GM12878 (cell line): ENCODE measurements at regions of chr6 and their contacts with region 1.

Region 1: GRCh38 chr6:137641474-137642077 is 147.4 kb upstream of the OLIG3 start:
- DNase-seq: no peak
- ATAC-seq: peak; percentile 79
- H3K4me3 ChIP-seq: no peak overlapping the region
- H3K27ac ChIP-seq: no peak overlapping the region
- H3K4me1 ChIP-seq: peaks cover 21% of the 10 kb centered on the region
- H3K27me3 ChIP-seq: no peaks in the 10 kb centered on the region
- CTCF ChIP-seq: peak; percentile 53 to 83 (median 65)
- EP300 ChIP-seq: no peak
- POLR2A ChIP-seq: no peak
- RAD21 ChIP-seq: peak; percentile 91

Region 2: DNA sequence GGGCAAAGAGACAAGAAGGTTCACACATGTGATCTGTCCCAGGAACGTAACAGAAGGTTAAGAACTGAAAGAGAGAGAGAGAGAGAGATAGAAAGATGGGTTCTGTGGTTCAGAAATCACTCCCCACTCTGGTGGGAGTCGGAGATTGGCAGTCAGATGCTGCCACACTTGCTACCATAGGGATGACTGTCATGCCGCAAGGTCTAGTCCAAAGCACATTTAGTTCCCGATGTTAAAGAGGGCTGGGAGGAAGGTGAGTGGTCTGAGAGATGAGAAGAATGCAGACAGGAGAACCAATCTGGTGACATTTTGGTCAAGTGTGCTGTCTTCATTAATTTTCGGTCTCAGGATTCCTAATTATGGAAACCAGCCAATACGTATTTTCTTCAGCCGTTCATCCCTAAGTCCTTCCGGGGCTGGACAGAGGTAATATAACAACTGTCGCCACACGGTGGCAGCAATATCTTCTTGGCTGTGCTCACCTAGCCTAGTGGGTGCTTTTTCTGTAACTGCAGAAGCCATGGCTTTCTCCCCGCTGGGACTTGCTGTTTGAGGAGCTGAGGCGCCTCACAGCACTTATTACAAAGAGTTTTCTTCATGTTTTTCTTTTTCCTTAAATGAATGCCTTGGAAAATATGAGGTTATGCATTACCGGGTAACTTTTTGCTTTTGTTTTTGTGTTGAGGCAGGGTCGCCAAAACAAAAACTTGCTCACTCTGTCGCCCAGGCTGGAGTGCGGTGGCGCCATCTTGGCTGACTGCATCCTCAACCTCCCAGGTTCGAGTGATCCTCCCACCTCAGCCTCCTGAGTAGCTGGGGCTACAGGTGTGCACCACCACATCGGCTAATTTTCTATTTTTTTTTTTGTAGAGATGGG is 673.5 kb before region 1 on chr6:
- CTCF ChIA-PET with region 1: interaction called, 4 read pairs
- POLR2A ChIA-PET with region 1: no interaction called
- RAD21 ChIA-PET with region 1: interaction called, 3 read pairs
- SMC1A ChIA-PET with region 1: interaction called, 4 read pairs
- in situ Hi-C with region 1: no loop called
- intact Hi-C with region 1: loop called (anchors 1 kb)
- DNase-seq: peak; percentile 35
- ATAC-seq: peak; percentile 99
- H3K4me3 ChIP-seq: no peak overlapping the region
- H3K27ac ChIP-seq: no peak overlapping the region
- H3K4me1 ChIP-seq: no peaks in the 10 kb centered on the region
- H3K27me3 ChIP-seq: no peaks in the 10 kb centered on the region
- CTCF ChIP-seq: peak; percentile 62 to 82 (median 71); a peak in 5 of 6 replicates
- EP300 ChIP-seq: no peak
- POLR2A ChIP-seq: no peak
- RAD21 ChIP-seq: peak; percentile 78

Region 3: GRCh38 chr6:137415127-137415833 is 226.3 kb before region 1 on chr6:
- CTCF ChIA-PET with region 1: interaction called, 5 read pairs
- POLR2A ChIA-PET with region 1: no interaction called
- RAD21 ChIA-PET with region 1: interaction called, 4 read pairs
- SMC1A ChIA-PET with region 1: no interaction called
- in situ Hi-C with region 1: no loop called
- intact Hi-C with region 1: loop called (anchors 5 kb)
- DNase-seq: no peak
- ATAC-seq: peak; percentile 99
- H3K4me3 ChIP-seq: peak overlapping the region; percentile 62
- H3K27ac ChIP-seq: no peak overlapping the region
- H3K4me1 ChIP-seq: peaks cover 4% of the 10 kb centered on the region
- H3K27me3 ChIP-seq: peaks cover 0 to 3% of the 10 kb centered on the region in 2 experiments; a peak in 1 of 4 replicates
- CTCF ChIP-seq: peak; percentile 79 to 89 (median 85)
- EP300 ChIP-seq: no peak
- POLR2A ChIP-seq: no peak
- RAD21 ChIP-seq: peak; percentile 84

Region 4: DNA sequence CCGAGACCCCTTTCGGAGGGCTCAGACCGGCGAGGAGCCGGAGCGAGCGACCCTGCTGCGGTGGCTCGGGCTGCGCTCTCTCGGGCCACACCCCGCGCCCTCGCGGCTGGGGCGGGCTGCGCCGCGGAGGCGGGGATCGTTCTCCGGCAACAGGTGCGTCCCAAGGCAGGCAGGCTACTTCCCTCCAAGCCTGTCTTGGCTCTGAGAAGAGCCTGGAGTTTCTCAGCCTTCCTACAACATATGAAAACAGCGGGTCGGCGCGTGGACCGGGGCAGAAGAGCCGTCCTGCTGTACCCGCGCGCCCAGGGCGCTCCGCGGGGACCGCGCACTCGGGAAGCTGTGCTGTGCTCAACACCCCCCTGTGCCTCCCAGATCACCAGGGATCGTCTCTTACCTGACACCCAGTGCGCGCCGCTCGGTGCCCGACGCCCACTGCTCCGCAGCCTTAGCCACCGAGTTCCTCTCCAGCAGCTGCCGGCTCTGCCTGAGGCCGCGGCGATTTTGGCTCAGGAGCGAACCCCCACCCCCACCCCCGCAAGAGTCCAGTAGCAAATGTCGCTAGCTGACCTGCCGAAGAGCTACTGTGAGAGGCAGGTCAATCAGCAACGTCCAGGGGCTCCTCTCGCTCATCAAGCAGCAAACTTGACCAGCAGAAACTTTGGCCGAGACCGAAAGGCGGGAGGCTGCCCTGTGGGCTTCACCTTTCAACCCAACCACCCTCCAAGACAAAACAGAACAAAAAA is 143.7 kb before region 1 on chr6:
- CTCF ChIA-PET with region 1: no interaction called
- POLR2A ChIA-PET with region 1: no interaction called
- RAD21 ChIA-PET with region 1: no interaction called
- SMC1A ChIA-PET with region 1: no interaction called
- in situ Hi-C with region 1: no loop called
- intact Hi-C with region 1: no loop called
- DNase-seq: no peak
- ATAC-seq: no peak
- H3K4me3 ChIP-seq: no peak overlapping the region
- H3K27ac ChIP-seq: no peak overlapping the region
- H3K4me1 ChIP-seq: no peaks in the 10 kb centered on the region
- H3K27me3 ChIP-seq: peaks cover 23 to 43% of the 10 kb centered on the region in 2 experiments
- CTCF ChIP-seq: no peak
- EP300 ChIP-seq: no peak
- POLR2A ChIP-seq: no peak
- RAD21 ChIP-seq: no peak

Region 5: DNA sequence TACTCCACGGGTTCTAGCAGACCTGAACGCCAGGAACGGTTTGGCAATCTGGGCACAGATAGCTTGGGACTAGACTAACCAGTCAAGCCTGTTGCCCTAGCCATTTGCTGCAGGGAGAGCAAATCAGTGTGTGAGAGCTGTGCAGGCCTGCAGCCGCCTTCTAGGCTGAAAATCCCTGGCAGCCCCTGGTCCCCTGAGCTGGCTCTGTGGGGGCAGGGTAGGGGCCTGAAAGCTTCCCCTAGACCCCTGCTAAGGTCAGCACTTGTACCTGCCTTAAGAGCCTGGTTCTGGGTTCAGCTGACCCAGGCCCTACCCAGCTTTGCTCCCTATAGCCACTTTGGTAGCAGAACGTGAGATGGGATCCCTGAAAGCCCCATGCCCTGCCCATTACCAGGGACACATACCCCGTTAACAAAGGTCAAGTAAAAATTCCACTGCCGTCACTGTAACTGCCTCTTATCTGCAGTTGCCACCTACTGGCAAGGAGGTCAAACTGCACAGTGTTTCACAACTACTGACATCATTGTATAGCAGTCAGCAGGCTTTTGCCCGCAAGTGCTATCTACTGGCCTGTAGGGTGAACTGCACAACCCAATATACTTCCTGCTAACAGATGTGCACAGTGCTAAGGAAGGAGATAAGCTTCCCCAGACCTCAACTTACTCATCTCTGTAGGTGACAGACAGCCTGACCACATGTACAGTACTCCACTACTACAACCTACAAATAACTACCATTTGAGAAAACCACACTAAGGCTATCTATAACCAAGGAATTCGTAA is 52.3 kb before region 1 on chr6:
- CTCF ChIA-PET with region 1: interaction called, 25 read pairs
- POLR2A ChIA-PET with region 1: no interaction called
- RAD21 ChIA-PET with region 1: interaction called, 4 read pairs
- SMC1A ChIA-PET with region 1: interaction called, 10 read pairs
- in situ Hi-C with region 1: no loop called
- intact Hi-C with region 1: loop called (anchors 1 kb)
- DNase-seq: peak; percentile 74
- ATAC-seq: peak; percentile 100
- H3K4me3 ChIP-seq: 0 out of 2 replicates have a peak overlapping the region, but pooled peaks have one; percentile 19
- H3K27ac ChIP-seq: no peak overlapping the region
- H3K4me1 ChIP-seq: peaks cover 2% of the 10 kb centered on the region; the same call in 1 of the 2 replicates
- H3K27me3 ChIP-seq: no peaks in the 10 kb centered on the region
- CTCF ChIP-seq: peak; percentile 62 to 98 (median 81)
- EP300 ChIP-seq: no peak
- POLR2A ChIP-seq: no peak
- RAD21 ChIP-seq: peak; percentile 72